ENCODE measurements at regions of chr1 and their contacts with region 1.

Region 1: GRCh38 chr1:153990468-153991150 is at the start of gene RPS27:
- DNase-seq: peak; percentile 73
- ATAC-seq: peak; percentile 80
- H3K4me3 Mint-ChIP-seq: peak within 1 kb of the TSS; percentile 98
- H3K27ac Mint-ChIP-seq: peak within 1 kb of the TSS; percentile 99
- H3K4me1 Mint-ChIP-seq: peaks cover 53% of the 10 kb centered on the region
- H3K27me3 Mint-ChIP-seq: no peaks in the 10 kb centered on the region
- CTCF ChIP-seq: no peak
- total RNA-seq, gene RPS27: 3,463 and 4,673 TPM in 2 replicates

Region 2: GRCh38 chr1:153572569-153573015 is 418.0 kb before region 1 on chr1:
- CTCF ChIA-PET with region 1: interaction called, 17 read pairs
- POLR2A ChIA-PET with region 1: interaction called, 3 read pairs
- intact Hi-C with region 1: loop called (anchors 1 kb)
- DNase-seq: peak; percentile 53
- ATAC-seq: peak; percentile 93
- H3K4me3 Mint-ChIP-seq: no peak overlapping the region
- H3K27ac Mint-ChIP-seq: peak overlapping the region; percentile 79
- H3K4me1 Mint-ChIP-seq: peaks cover 27% of the 10 kb centered on the region
- H3K27me3 Mint-ChIP-seq: peaks cover 8% of the 10 kb centered on the region
- CTCF ChIP-seq: no peak

Region 3: GRCh38 chr1:153677718-153678505 is 312.7 kb before region 1 on chr1:
- CTCF ChIA-PET with region 1: interaction called, 9 read pairs
- POLR2A ChIA-PET with region 1: interaction called, 5 read pairs
- intact Hi-C with region 1: loop called (anchors 1 kb)
- DNase-seq: peak; percentile 40
- ATAC-seq: peak; percentile 67
- H3K4me3 Mint-ChIP-seq: peak overlapping the region; percentile 86
- H3K27ac Mint-ChIP-seq: no peak overlapping the region
- H3K4me1 Mint-ChIP-seq: peaks cover 21% of the 10 kb centered on the region
- H3K27me3 Mint-ChIP-seq: peaks cover 31% of the 10 kb centered on the region
- CTCF ChIP-seq: peak; percentile 73

Region 4: DNA sequence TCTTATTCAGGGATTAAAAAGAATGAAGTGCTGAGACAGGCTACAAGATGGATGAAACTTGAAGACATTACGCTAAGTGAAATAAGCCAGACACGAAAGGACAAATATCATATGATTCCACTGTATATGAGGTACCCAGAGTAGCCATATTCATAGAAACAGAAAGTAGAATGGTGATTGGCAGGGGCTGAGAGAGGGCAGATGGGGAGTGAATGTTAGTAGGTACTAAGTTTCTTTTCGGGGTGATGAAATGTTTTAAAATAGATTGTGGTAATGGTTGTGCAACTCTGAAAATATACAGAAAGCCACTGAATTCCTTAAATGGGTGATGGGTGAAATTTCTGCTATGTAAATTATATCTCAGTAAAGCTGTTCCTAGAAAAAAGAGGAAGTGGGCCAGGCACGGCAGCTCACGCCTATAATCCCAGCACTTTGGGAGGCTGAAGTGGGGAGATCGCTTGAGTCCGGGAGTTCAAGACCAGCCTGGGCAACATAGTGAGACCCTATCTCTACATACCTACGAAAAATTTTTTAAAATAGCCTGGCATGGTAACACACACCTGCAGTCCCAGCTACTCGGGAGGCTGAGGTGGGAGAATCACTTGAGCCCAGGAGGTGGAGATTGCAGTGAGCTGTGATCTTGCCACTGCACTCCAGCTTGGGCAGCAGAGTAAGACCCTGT is 199.5 kb before region 1 on chr1:
- CTCF ChIA-PET with region 1: interaction called, 44 read pairs
- POLR2A ChIA-PET with region 1: interaction called, 33 read pairs
- intact Hi-C with region 1: no loop called
- DNase-seq: no peak
- ATAC-seq: peak; percentile 92
- H3K4me3 Mint-ChIP-seq: peak overlapping the region; percentile 71
- H3K27ac Mint-ChIP-seq: peak overlapping the region; percentile 96
- H3K4me1 Mint-ChIP-seq: peaks cover 45% of the 10 kb centered on the region
- H3K27me3 Mint-ChIP-seq: no peaks in the 10 kb centered on the region
- CTCF ChIP-seq: no peak

Region 5: DNA sequence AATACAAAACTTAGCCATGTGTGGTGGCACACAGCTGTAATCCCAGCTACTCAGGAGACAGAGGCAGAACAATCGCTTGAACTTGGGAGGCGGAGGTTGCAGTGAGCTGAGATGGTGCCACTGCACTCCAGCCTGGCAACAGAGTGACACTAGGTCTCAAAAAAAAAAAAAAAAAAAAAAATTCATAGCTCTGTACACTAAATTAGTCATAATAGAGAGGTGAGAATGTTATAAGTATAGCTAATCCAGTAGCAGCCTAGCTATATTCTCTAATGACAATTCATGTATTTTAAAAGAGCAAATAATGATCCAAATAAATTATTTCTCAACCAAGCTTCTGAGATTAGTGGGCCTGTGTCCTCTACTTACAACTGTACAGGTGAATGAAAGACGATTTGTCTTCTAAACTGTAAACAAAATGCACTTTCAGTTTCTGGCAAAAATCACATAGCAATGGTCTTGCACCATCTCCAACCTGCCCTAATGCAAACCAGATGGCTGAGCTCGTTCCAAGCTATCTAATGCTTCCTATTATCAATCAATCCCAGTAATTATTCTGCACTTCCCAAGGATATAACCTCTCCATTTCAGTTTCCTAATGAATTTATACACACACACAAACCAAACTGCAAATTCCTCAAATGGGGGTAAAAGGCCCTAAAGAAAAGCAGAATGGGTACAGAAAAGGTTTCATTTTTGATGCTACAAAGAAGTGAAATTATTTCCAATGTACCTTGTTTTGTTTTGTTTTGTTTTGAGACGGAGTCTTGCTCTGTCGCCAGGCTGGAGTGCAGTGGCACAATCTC is 124.4 kb before region 1 on chr1:
- CTCF ChIA-PET with region 1: no interaction called
- POLR2A ChIA-PET with region 1: interaction called, 11 read pairs
- intact Hi-C with region 1: no loop called
- DNase-seq: no peak
- ATAC-seq: no peak
- H3K4me3 Mint-ChIP-seq: no peak overlapping the region
- H3K27ac Mint-ChIP-seq: peak overlapping the region; percentile 16
- H3K4me1 Mint-ChIP-seq: peaks cover 30% of the 10 kb centered on the region
- H3K27me3 Mint-ChIP-seq: no peaks in the 10 kb centered on the region
- CTCF ChIP-seq: no peak

Region 6: DNA sequence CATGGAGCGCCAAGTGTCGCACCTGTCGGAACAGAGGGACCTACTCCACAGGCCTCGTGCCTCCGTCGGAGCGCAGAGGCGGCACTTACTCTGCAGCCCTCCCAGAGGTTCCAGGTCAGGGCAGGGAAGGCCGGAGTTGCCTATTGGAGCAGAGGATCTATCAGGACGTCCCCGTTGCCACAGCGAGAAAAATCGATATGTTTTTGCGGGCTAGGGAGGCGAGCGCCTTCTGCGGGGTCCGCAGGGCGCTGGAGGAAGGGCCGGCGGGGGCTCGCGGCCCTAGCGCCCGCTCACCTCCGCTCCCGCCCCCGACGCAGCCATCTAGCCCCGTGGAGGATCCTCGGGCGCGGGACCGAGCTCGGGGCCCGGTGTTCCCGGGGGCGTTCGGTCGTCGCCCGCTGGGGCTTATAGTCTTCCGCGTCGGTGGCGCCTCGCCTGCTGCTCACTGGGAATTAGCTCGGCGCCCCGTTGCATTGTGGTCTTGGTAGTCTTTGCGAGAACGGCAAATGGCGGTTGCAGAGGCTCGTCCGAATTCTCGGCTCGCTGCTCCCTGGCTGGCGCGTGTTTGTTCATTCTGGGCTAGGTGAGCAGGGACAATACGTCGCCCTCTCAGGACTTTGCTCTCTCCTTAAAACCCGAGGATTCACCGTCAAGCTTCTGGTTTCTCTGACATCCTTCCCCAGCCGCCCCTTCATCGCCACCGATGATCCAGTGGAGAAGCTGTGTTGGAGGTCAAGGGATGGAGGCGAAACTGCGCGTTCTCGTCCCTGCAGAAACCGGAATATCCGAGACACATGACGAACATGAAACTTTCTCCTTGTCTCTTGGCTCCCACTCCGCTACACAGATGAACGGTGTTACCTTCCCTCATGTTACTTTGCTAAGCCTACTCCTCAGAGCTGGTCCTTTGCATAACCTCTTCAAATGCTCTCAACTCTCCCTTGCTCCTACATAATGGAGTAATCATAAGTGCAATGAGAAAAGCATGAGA is 13.1 kb before region 1 on chr1 and contains the start of gene JTB:
- CTCF ChIA-PET with region 1: interaction called, 15 read pairs
- POLR2A ChIA-PET with region 1: interaction called, 96 read pairs
- intact Hi-C with region 1: loop called (anchors 1 kb)
- DNase-seq: peak; percentile 72
- ATAC-seq: peak; percentile 97
- H3K4me3 Mint-ChIP-seq: peak within 1 kb of the TSS; percentile 98
- H3K27ac Mint-ChIP-seq: peak within 1 kb of the TSS; percentile 97
- H3K4me1 Mint-ChIP-seq: peaks cover 32% of the 10 kb centered on the region
- H3K27me3 Mint-ChIP-seq: no peaks in the 10 kb centered on the region
- CTCF ChIP-seq: no peak
- total RNA-seq, gene JTB: 137 and 147 TPM in 2 replicates

Region 7: GRCh38 chr1:154097873-154098272 is 107.3 kb after region 1 on chr1:
- CTCF ChIA-PET with region 1: no interaction called
- POLR2A ChIA-PET with region 1: no interaction called
- intact Hi-C with region 1: no loop called
- DNase-seq: no peak
- ATAC-seq: no peak
- H3K4me3 Mint-ChIP-seq: no peak overlapping the region
- H3K27ac Mint-ChIP-seq: no peak overlapping the region
- H3K4me1 Mint-ChIP-seq: no peaks in the 10 kb centered on the region
- H3K27me3 Mint-ChIP-seq: no peaks in the 10 kb centered on the region
- CTCF ChIP-seq: no peak

Measured in activated B cell treated with CpG ODN at 0.5 μM for 24 hours (primary cell).